ENCODE measurements at regions of chr3 and their contacts with region 1.

Region 1: DNA sequence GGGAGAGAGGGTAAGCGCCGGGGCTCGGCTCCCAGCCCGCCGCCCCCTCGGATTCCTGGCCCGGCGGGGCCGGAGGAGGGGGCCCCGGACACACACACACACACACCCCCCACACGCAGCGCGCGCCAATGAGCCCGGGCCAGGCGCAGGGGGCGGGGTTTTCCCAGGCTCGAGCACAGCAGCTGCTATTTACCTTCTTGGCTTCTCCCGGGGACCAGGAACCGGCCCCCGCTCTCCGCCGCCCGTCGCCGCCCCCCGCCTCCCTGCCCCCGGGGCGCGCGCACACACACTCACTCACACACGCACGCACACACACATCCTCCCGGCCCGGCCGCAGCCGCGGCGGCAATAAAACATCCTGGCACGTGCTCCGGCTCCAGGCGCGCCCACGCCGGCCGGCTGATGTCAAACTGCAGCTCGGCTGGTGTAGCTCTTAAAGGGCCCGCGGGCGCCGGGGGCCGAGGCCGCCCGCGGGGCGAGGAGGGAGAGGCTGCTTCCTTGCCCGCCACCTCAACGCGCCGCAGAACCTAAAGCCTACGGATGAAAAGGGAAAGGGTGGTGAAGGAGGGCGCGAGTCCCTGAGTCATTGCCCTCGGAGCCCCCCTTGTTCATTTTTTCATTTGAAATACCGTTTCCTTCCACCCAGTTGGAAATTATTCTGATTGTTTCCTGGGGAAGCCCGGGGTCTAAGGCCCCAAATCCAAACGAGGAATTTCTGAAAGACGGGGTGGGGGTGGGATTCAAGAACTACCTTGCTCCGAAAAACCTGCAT is 1.0 kb upstream of the HES1 start:
- DNase-seq: peak; percentile 92
- ATAC-seq: peak; percentile 67
- H3K4me3 Mint-ChIP-seq: peak overlapping the region; percentile 72
- H3K27ac Mint-ChIP-seq: peak overlapping the region; percentile 39
- H3K4me1 Mint-ChIP-seq: peaks cover 45% of the 10 kb centered on the region
- H3K27me3 Mint-ChIP-seq: peaks cover 60% of the 10 kb centered on the region

Region 2: GRCh38 chr3:193592944-193593667 is 541.8 kb before region 1 on chr3 and contains the start of gene OPA1:
- CTCF ChIA-PET with region 1: no interaction called
- POLR2A ChIA-PET with region 1: no interaction called
- intact Hi-C with region 1: loop called in 1 of 2 experiments (anchors 1 kb)
- DNase-seq: peak; percentile 96
- ATAC-seq: peak; percentile 90
- H3K4me3 Mint-ChIP-seq: peak within 1 kb of the TSS; percentile 97
- H3K27ac Mint-ChIP-seq: peak within 1 kb of the TSS; percentile 100
- H3K4me1 Mint-ChIP-seq: peaks cover 41% of the 10 kb centered on the region
- H3K27me3 Mint-ChIP-seq: no peaks in the 10 kb centered on the region
- total RNA-seq, gene OPA1: 94.9 to 115 TPM

Region 3: DNA sequence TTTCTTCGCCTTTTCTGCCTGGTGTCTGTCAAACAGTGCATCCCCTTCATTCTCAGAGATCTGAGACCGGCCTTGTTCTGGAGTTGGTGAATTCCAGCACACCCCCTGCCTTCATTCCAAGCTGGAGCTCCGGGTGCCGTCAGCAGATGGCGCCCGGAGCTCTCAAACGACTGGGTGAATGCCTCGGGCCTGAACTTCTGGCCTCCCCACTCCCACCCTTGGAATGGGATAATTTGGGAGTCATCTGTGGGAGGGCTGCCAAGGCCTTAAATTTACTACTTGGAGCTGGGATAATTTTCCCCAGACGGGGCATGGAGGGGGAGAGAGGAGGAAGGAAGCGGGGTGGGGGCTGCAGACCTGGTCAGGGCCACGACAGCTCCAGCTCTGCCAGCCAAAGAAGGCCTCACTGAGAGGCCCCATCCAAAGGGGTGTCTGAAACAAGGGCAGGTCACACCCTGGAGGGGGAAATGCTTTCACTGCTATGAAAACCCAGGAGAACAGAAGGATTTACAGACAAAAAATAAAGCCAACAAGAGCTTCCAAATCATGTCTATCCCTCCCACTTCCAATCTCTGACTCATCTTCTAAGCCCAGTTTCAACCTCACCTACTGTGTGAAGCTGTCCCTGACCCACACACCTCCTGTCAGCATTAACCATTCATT is 354.0 kb before region 1 on chr3:
- CTCF ChIA-PET with region 1: interaction called, 9 read pairs
- POLR2A ChIA-PET with region 1: no interaction called
- intact Hi-C with region 1: loop called in 1 of 2 experiments (anchors 1 kb)
- DNase-seq: peak; percentile 65
- ATAC-seq: peak; percentile 53
- H3K4me3 Mint-ChIP-seq: no peak overlapping the region
- H3K27ac Mint-ChIP-seq: no peak overlapping the region
- H3K4me1 Mint-ChIP-seq: peaks cover 6% of the 10 kb centered on the region
- H3K27me3 Mint-ChIP-seq: peaks cover 26% of the 10 kb centered on the region

Region 4: GRCh38 chr3:193971261-193971751 is 163.6 kb before region 1 on chr3:
- CTCF ChIA-PET with region 1: interaction called, 3 read pairs
- POLR2A ChIA-PET with region 1: no interaction called
- intact Hi-C with region 1: loop called in 1 of 2 experiments (anchors 5 kb)
- DNase-seq: peak; percentile 38
- ATAC-seq: peak; percentile 77
- H3K4me3 Mint-ChIP-seq: no peak overlapping the region
- H3K27ac Mint-ChIP-seq: no peak overlapping the region
- H3K4me1 Mint-ChIP-seq: peaks cover 28% of the 10 kb centered on the region
- H3K27me3 Mint-ChIP-seq: peaks cover 23% of the 10 kb centered on the region

Region 5: GRCh38 chr3:194306109-194306686 is 171.3 kb after region 1 on chr3:
- CTCF ChIA-PET with region 1: no interaction called
- POLR2A ChIA-PET with region 1: no interaction called
- intact Hi-C with region 1: loop called in 1 of 2 experiments (anchors 5 kb)
- DNase-seq: peak; percentile 67
- ATAC-seq: peak; percentile 37
- H3K4me3 Mint-ChIP-seq: peak overlapping the region; percentile 22
- H3K27ac Mint-ChIP-seq: peak overlapping the region; percentile 82
- H3K4me1 Mint-ChIP-seq: peaks cover 30% of the 10 kb centered on the region
- H3K27me3 Mint-ChIP-seq: peaks cover 2% of the 10 kb centered on the region

Region 6: GRCh38 chr3:194486540-194487288 is 351.8 kb after region 1 on chr3 and contains the start of gene ATP13A3:
- CTCF ChIA-PET with region 1: interaction called, 3 read pairs
- POLR2A ChIA-PET with region 1: no interaction called
- intact Hi-C with region 1: loop called in 1 of 2 experiments (anchors 2 kb)
- DNase-seq: peak; percentile 94
- ATAC-seq: peak; percentile 75
- H3K4me3 Mint-ChIP-seq: peak within 1 kb of the TSS; percentile 95
- H3K27ac Mint-ChIP-seq: peak within 1 kb of the TSS; percentile 93
- H3K4me1 Mint-ChIP-seq: peaks cover 54% of the 10 kb centered on the region
- H3K27me3 Mint-ChIP-seq: peaks cover 2% of the 10 kb centered on the region
- total RNA-seq, gene ATP13A3: 61.4 to 107 TPM